ENCODE measurements at regions of chr10 and their contacts with region 1.

Region 1: GRCh38 chr10:77837240-77837924 is 89.2 kb downstream of the DLG5 start:
- DNase-seq: peak; percentile 86
- H3K4me3 Mint-ChIP-seq: no peak overlapping the region
- H3K27ac Mint-ChIP-seq: no peak overlapping the region
- H3K4me1 Mint-ChIP-seq: peaks cover 4% of the 10 kb centered on the region
- H3K27me3 Mint-ChIP-seq: no peaks in the 10 kb centered on the region

Region 2: GRCh38 chr10:77165445-77166208 is 671.8 kb before region 1 on chr10:
- CTCF ChIA-PET with region 1: no interaction called
- intact Hi-C with region 1: loop called (anchors 1 kb)
- DNase-seq: peak; percentile 60
- H3K4me3 Mint-ChIP-seq: peak overlapping the region; percentile 34
- H3K27ac Mint-ChIP-seq: no peak overlapping the region
- H3K4me1 Mint-ChIP-seq: peaks cover 3% of the 10 kb centered on the region
- H3K27me3 Mint-ChIP-seq: peaks cover 31% of the 10 kb centered on the region

Region 3: DNA sequence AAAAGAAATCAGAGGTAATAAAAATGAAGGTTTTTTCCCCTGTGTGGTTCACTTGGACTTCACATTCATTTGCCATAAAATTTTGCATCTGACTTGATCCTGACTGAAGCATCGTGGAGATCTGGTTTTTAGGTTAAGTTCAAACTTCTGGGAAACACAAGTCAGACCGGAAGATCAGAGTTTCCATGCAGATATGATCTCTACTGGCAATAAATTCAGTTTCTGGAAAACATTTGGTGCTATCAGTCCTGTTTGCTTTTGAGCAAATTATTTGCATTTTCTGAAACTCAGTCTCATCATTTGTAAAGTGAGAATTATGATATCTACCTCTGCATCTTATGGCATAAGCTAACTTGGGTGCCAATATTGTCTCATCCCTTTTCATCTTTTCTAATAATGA is 118.4 kb before region 1 on chr10:
- CTCF ChIA-PET with region 1: interaction called, 8 read pairs
- intact Hi-C with region 1: loop called (anchors 1 kb)
- DNase-seq: no peak
- H3K4me3 Mint-ChIP-seq: no peak overlapping the region
- H3K27ac Mint-ChIP-seq: no peak overlapping the region
- H3K4me1 Mint-ChIP-seq: no peaks in the 10 kb centered on the region
- H3K27me3 Mint-ChIP-seq: peaks cover 8% of the 10 kb centered on the region

Region 4: DNA sequence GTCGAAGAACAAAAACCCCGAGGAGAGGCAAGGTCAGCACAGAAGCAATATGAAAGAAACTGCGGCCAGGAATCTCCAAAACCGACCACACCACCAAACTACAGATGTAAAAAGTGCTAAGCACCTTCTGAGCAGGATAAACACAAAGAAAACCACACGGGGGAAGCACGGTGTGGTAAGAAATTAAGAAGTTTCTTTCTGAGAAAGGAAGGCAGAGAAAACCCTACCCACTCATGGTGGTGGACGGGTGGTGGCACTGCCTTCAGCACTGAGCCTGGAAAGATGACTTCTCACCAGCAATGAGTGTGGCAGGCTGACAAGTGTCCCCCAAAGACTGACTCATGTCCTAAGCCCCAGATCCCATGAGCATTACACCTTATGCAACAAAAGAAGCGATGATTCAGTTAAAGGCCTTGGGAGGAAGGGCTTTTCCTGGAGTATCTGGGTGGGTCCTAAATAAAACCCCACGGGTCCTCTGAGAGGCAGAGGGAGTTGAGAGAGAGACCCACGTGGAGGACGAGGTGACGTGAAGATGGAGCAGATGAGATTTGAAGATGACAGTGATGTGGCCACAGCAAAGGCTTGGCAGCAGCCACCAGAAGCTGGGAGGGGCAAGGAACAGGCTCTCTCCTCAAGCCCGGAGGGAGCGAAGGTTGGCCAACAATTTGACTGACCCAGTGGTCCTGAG is 35.8 kb before region 1 on chr10:
- CTCF ChIA-PET with region 1: no interaction called
- intact Hi-C with region 1: loop called (anchors 1 kb)
- DNase-seq: peak; percentile 53
- H3K4me3 Mint-ChIP-seq: no peak overlapping the region
- H3K27ac Mint-ChIP-seq: no peak overlapping the region
- H3K4me1 Mint-ChIP-seq: peaks cover 5% of the 10 kb centered on the region
- H3K27me3 Mint-ChIP-seq: no peaks in the 10 kb centered on the region